ENCODE measurements at regions of chr20 and their contacts with region 1.

Region 1: DNA sequence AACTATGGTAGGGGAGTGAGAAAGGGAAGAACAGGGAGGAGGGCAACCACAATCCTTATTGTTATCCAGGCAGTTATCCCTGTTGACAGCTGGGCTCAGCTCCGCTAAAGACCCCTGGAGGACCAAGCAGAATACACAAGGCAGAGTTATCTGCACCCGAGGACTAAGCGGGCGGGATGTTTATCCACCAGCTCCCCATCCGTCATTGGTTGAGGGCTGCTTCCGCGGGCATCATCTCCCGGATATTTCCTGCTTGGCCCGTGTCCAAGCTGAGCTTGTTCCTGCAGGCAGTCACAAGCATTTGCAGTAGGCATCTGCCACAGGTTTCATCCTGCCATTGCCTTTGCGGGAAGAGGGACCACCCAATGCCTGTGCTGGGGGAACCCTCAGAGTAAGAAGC is 102.1 kb downstream of the DLGAP4 start:
- DNase-seq: peak; percentile 28
- H3K4me3 ChIP-seq: no peak overlapping the region
- H3K27ac ChIP-seq: no peak overlapping the region
- H3K4me1 ChIP-seq: no peaks in the 10 kb centered on the region
- H3K27me3 ChIP-seq: peaks cover 10% of the 10 kb centered on the region
- CTCF ChIP-seq: no peak
- EP300 ChIP-seq: no peak
- POLR2A ChIP-seq: no peak

Region 2: GRCh38 chr20:36344517-36345136 is 63.6 kb before region 1 on chr20:
- in situ Hi-C with region 1: no loop called
- intact Hi-C with region 1: no loop called
- DNase-seq: peak; percentile 14
- H3K4me3 ChIP-seq: no peak overlapping the region
- H3K27ac ChIP-seq: no peak overlapping the region
- H3K4me1 ChIP-seq: no peaks in the 10 kb centered on the region
- H3K27me3 ChIP-seq: peaks cover 5% of the 10 kb centered on the region
- CTCF ChIP-seq: no peak
- EP300 ChIP-seq: no peak
- POLR2A ChIP-seq: no peak

Region 3: DNA sequence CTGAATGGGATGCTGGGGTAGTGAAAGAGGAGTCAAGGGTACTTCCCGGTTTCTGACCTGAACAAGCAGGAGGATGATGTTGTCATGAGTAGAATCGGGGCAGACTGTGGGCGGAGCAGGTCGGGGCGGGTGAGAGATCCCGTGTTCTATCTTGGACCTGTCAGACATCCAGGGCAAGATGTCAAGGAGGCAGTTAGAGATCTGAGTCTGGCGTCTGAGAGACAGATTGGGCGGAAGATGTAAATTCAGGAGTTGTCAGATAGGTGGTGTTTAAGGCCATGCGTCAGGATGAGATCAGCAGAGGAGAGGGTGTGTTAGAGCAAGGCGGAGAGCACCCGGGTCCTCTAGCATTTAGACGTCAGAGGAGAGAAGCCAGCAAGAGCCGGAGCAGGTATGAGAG is 13.4 kb after region 1 on chr20:
- in situ Hi-C with region 1: no loop called
- intact Hi-C with region 1: loop called (anchors 1 kb)
- DNase-seq: no peak
- H3K4me3 ChIP-seq: no peak overlapping the region
- H3K27ac ChIP-seq: no peak overlapping the region
- H3K4me1 ChIP-seq: no peaks in the 10 kb centered on the region
- H3K27me3 ChIP-seq: peaks cover 11% of the 10 kb centered on the region
- CTCF ChIP-seq: no peak
- EP300 ChIP-seq: no peak
- POLR2A ChIP-seq: no peak

Region 4: DNA sequence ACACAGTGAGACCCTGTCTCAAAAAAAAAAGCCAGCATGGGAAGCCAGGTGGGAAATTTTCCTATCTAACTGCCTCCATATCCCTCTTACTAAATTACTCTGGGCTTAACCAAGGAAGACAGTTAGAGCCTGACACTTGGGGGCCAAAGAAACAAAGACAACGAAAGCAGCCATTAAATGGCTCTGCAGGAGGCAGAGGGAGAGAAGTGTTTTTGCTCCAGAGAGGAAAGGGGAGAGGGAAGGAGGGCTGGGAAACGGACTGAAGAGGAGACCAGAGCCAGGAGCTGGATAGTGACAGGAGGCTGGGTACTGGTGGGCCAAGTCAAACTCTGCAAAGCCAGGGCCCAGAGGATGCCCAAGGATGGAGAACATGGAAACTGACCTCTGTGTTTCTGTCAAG is 154.5 kb after region 1 on chr20:
- in situ Hi-C with region 1: no loop called
- intact Hi-C with region 1: no loop called
- DNase-seq: no peak
- H3K4me3 ChIP-seq: no peak overlapping the region
- H3K27ac ChIP-seq: no peak overlapping the region
- H3K4me1 ChIP-seq: no peaks in the 10 kb centered on the region
- H3K27me3 ChIP-seq: no peaks in the 10 kb centered on the region
- CTCF ChIP-seq: no peak
- EP300 ChIP-seq: no peak
- POLR2A ChIP-seq: no peak

Region 5: GRCh38 chr20:38143646-38144554 is 1735.7 kb after region 1 on chr20:
- in situ Hi-C with region 1: no loop called
- intact Hi-C with region 1: loop called (anchors 10 kb)
- DNase-seq: peak; percentile 81
- H3K4me3 ChIP-seq: no peak overlapping the region
- H3K27ac ChIP-seq: peak overlapping the region; percentile 62 to 82 (median 78)
- H3K4me1 ChIP-seq: peaks cover 16 to 34% (median 32%) of the 10 kb centered on the region in 4 donors
- H3K27me3 ChIP-seq: no peaks in the 10 kb centered on the region
- CTCF ChIP-seq: no peak
- EP300 ChIP-seq: no peak
- POLR2A ChIP-seq: no peak

Measured in transverse colon (tissue), 4 donors.